AG04449 (cell line): ENCODE measurements at regions of chr6 and their contacts with region 1.

Region 1: GRCh38 chr6:113936093-113936934 is 34.6 kb downstream of the HDAC2 start:
- DNase-seq: peak; percentile 34
- H3K4me3 ChIP-seq: no peak overlapping the region
- CTCF ChIP-seq: peak; percentile 55

Region 2: DNA sequence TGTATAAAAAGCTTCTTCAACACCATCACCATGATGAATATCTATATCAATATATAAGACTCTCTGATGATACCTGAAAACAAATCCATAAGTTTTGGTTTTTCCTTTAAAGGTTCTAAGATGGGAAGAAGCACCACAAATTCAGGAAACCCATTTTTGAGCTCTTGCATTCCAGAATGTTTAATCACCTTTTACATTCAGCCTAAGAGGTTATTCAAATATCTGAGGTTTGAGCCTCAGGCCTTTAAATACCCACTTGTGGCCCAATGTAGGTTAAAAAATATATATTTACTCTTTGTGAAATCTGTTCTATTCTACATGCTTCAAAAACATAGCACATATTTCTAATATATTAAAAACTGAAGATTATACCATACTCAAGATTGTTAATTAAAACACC is 17.0 kb after region 1 on chr6:
- CTCF ChIA-PET with region 1: interaction called, 26 read pairs
- POLR2A ChIA-PET with region 1: no interaction called
- DNase-seq: no peak
- H3K4me3 ChIP-seq: no peak overlapping the region
- CTCF ChIP-seq: no peak

Region 3: GRCh38 chr6:114144887-114145851 is 208.9 kb after region 1 on chr6:
- CTCF ChIA-PET with region 1: no interaction called
- POLR2A ChIA-PET with region 1: no interaction called
- DNase-seq: no peak
- H3K4me3 ChIP-seq: no peak overlapping the region
- CTCF ChIP-seq: no peak